ENCODE measurements at regions of chr20 and their contacts with region 1.

Region 1: GRCh38 chr20:1509237-1509636 is 18.0 kb upstream of the SIRPB2 start:
- DNase-seq: peak; percentile 19
- H3K4me3 Mint-ChIP-seq: no peak overlapping the region
- H3K27ac Mint-ChIP-seq: no peak overlapping the region
- H3K4me1 Mint-ChIP-seq: peaks cover 14% of the 10 kb centered on the region
- H3K27me3 Mint-ChIP-seq: peaks cover 32% of the 10 kb centered on the region
- CTCF ChIP-seq: peak; percentile 24

Region 2: GRCh38 chr20:1636621-1637020 is 127.4 kb after region 1 on chr20:
- CTCF ChIA-PET with region 1: no interaction called
- intact Hi-C with region 1: loop called (anchors 5 kb)
- DNase-seq: no peak
- H3K4me3 Mint-ChIP-seq: no peak overlapping the region
- H3K27ac Mint-ChIP-seq: no peak overlapping the region
- H3K4me1 Mint-ChIP-seq: peaks cover 43% of the 10 kb centered on the region
- H3K27me3 Mint-ChIP-seq: no peaks in the 10 kb centered on the region
- CTCF ChIP-seq: no peak

Region 3: DNA sequence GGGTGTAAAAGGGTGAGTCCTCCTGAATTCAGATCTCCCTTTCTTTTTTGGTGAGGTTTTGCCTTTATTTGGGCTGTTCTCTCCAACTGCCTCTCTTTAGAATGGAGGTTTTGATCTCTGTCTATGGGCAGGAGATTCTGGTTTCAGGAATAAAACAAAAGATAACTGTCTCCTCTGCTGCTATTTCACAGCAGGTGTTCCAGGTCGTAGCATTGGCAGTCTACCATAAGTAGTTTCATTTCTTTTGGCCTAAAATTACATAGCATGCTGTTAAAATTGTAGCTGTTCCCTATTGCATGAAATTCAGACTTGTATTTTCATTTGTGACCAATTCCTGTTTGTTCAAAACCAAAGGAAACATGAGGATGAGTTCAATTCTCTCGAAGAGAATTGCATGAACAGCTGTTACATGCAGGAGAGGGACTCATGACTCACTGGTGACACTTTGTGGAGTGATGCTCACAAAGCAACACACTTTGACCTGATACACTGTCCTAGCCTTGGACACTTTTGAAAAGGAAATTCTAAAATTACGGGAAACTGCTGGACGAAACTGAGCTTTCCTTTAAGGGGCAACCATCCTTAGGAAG is 225.1 kb after region 1 on chr20:
- CTCF ChIA-PET with region 1: no interaction called
- intact Hi-C with region 1: loop called (anchors 2 kb)
- DNase-seq: no peak
- H3K4me3 Mint-ChIP-seq: no peak overlapping the region
- H3K27ac Mint-ChIP-seq: no peak overlapping the region
- H3K4me1 Mint-ChIP-seq: no peaks in the 10 kb centered on the region
- H3K27me3 Mint-ChIP-seq: no peaks in the 10 kb centered on the region
- CTCF ChIP-seq: no peak

Region 4: DNA sequence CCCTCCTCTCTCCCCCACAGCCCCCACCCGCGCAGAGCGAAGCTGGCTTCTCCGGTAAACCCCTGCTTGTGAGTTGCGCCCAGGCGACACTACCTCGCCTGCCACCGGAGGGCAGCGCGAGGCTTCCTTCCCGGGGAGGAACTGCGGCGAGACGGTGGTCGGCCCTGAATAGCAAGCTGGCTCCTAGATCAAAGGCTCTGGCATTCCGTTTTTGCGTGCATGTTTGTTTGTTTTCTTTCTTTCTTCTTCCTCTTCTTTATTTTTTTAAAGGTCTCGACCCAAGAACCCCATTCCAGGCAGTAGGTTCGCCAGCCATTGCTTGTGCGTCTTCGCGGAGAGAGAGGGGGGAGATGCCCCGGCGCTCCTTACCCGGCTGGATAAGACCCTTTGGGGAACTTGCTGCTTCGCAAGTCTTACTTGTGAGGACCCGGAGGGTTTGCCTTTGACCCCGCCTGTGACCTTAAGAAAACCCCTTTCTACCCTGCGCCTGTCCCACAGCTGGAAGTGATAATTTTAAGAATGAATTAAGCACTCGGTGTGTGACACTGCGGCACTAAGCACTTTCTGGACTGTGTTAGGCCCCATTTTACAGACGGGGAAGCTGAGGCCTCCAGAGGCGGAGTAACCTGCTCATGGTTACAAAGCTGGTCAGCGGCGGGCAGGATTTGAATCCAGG is 293.3 kb after region 1 on chr20:
- CTCF ChIA-PET with region 1: no interaction called
- intact Hi-C with region 1: loop called (anchors 2 kb)
- DNase-seq: peak; percentile 63
- H3K4me3 Mint-ChIP-seq: peak overlapping the region; percentile 75
- H3K27ac Mint-ChIP-seq: no peak overlapping the region
- H3K4me1 Mint-ChIP-seq: peaks cover 38% of the 10 kb centered on the region
- H3K27me3 Mint-ChIP-seq: no peaks in the 10 kb centered on the region
- CTCF ChIP-seq: no peak

Measured in Calu3 (cell line).